MCF 10A (cell line): ENCODE measurements at regions of chr3 and their contacts with region 1.

Region 1: GRCh38 chr3:100032243-100032642 is 82.1 kb downstream of the FILIP1L start:
- DNase-seq: peak; percentile 34
- H3K4me3 Mint-ChIP-seq: peak overlapping the region; percentile 36
- H3K27ac Mint-ChIP-seq: peak overlapping the region; percentile 68
- H3K4me1 Mint-ChIP-seq: peaks cover 19% of the 10 kb centered on the region
- H3K27me3 Mint-ChIP-seq: no peaks in the 10 kb centered on the region
- CTCF ChIP-seq: no peak

Region 2: GRCh38 chr3:99236576-99236975 is 795.7 kb before region 1 on chr3:
- CTCF ChIA-PET with region 1: no interaction called
- POLR2A ChIA-PET with region 1: no interaction called
- intact Hi-C with region 1: no loop called
- DNase-seq: no peak
- H3K4me3 Mint-ChIP-seq: no peak overlapping the region
- H3K27ac Mint-ChIP-seq: peak overlapping the region; percentile 61
- H3K4me1 Mint-ChIP-seq: peaks cover 15% of the 10 kb centered on the region
- H3K27me3 Mint-ChIP-seq: no peaks in the 10 kb centered on the region
- CTCF ChIP-seq: no peak

Region 3: GRCh38 chr3:100047455-100048141 is 15.4 kb after region 1 on chr3:
- CTCF ChIA-PET with region 1: interaction called, 3 read pairs
- POLR2A ChIA-PET with region 1: interaction called, 18 read pairs
- intact Hi-C with region 1: no loop called
- DNase-seq: peak; percentile 74
- H3K4me3 Mint-ChIP-seq: peak overlapping the region; percentile 22
- H3K27ac Mint-ChIP-seq: peak overlapping the region; percentile 85
- H3K4me1 Mint-ChIP-seq: peaks cover 44% of the 10 kb centered on the region
- H3K27me3 Mint-ChIP-seq: no peaks in the 10 kb centered on the region
- CTCF ChIP-seq: no peak